HCT116 (cell line): ENCODE measurements at regions of chr9 and their contacts with region 1.

Region 1: GRCh38 chr9:113657703-113658544 is 194.4 kb downstream of the RGS3 start:
- DNase-seq: peak; percentile 75
- ATAC-seq: peak; percentile 95
- H3K4me3 ChIP-seq: no peak overlapping the region
- H3K27ac ChIP-seq: no peak overlapping the region
- H3K4me1 ChIP-seq: peaks cover 0 to 15% of the 10 kb centered on the region in 2 experiments; a peak in 1 of 4 replicates
- H3K27me3 ChIP-seq: peaks cover 14% of the 10 kb centered on the region; the same call in 1 of the 2 replicates
- CTCF ChIP-seq: peak; percentile 87 to 96 (median 95)
- POLR2A ChIP-seq: no peak
- RAD21 ChIP-seq: peak; percentile 98

Region 2: GRCh38 chr9:112921549-112921948 is 736.4 kb before region 1 on chr9:
- CTCF ChIA-PET with region 1: interaction called, 4 read pairs
- POLR2A ChIA-PET with region 1: no interaction called
- RAD21 ChIA-PET with region 1: no interaction called
- intact Hi-C with region 1: loop called (anchors 5 kb)
- DNase-seq: peak; percentile 22
- ATAC-seq: peak; percentile 85
- H3K4me3 ChIP-seq: no peak overlapping the region
- H3K27ac ChIP-seq: no peak overlapping the region
- H3K4me1 ChIP-seq: peaks cover 0 to 16% of the 10 kb centered on the region in 2 experiments; a peak in 2 of 4 replicates
- H3K27me3 ChIP-seq: no peaks in the 10 kb centered on the region
- CTCF ChIP-seq: peak; percentile 56 to 69 (median 64)
- POLR2A ChIP-seq: no peak
- RAD21 ChIP-seq: peak; percentile 68

Region 3: GRCh38 chr9:113309204-113309813 is 348.6 kb before region 1 on chr9:
- CTCF ChIA-PET with region 1: no interaction called
- POLR2A ChIA-PET with region 1: no interaction called
- RAD21 ChIA-PET with region 1: no interaction called
- intact Hi-C with region 1: loop called (anchors 10 kb)
- DNase-seq: peak; percentile 8
- ATAC-seq: peak; percentile 76
- H3K4me3 ChIP-seq: no peak overlapping the region
- H3K27ac ChIP-seq: no peak overlapping the region
- H3K4me1 ChIP-seq: no peaks in the 10 kb centered on the region
- H3K27me3 ChIP-seq: no peaks in the 10 kb centered on the region
- CTCF ChIP-seq: peak; percentile 74 to 86 (median 78)
- POLR2A ChIP-seq: no peak
- RAD21 ChIP-seq: peak; percentile 93

Region 4: GRCh38 chr9:113446323-113446740 is 211.6 kb before region 1 on chr9:
- CTCF ChIA-PET with region 1: interaction called, 159 read pairs
- POLR2A ChIA-PET with region 1: no interaction called
- RAD21 ChIA-PET with region 1: interaction called, 11 to 24 read pairs
- intact Hi-C with region 1: loop called (anchors 2 kb)
- DNase-seq: peak; percentile 31
- ATAC-seq: peak; percentile 76
- H3K4me3 ChIP-seq: no peak overlapping the region
- H3K27ac ChIP-seq: no peak overlapping the region
- H3K4me1 ChIP-seq: no peaks in the 10 kb centered on the region
- H3K27me3 ChIP-seq: no peaks in the 10 kb centered on the region
- CTCF ChIP-seq: peak; percentile 43 to 86 (median 67)
- POLR2A ChIP-seq: no peak
- RAD21 ChIP-seq: peak; percentile 90

Region 5: GRCh38 chr9:113578882-113579282 is 79.0 kb before region 1 on chr9:
- CTCF ChIA-PET with region 1: interaction called, 18 read pairs
- POLR2A ChIA-PET with region 1: no interaction called
- RAD21 ChIA-PET with region 1: interaction called in 1 of 2 experiments, 3 read pairs
- intact Hi-C with region 1: no loop called
- DNase-seq: peak; percentile 59
- ATAC-seq: peak; percentile 86
- H3K4me3 ChIP-seq: peak overlapping the region in 1 of 2 experiments; percentile 16; a peak in 2 of 4 replicates
- H3K27ac ChIP-seq: peak overlapping the region; percentile 82
- H3K4me1 ChIP-seq: peaks cover 52 to 70% of the 10 kb centered on the region in 2 experiments
- H3K27me3 ChIP-seq: no peaks in the 10 kb centered on the region
- CTCF ChIP-seq: no peak
- POLR2A ChIP-seq: no peak
- RAD21 ChIP-seq: no peak

Region 6: DNA sequence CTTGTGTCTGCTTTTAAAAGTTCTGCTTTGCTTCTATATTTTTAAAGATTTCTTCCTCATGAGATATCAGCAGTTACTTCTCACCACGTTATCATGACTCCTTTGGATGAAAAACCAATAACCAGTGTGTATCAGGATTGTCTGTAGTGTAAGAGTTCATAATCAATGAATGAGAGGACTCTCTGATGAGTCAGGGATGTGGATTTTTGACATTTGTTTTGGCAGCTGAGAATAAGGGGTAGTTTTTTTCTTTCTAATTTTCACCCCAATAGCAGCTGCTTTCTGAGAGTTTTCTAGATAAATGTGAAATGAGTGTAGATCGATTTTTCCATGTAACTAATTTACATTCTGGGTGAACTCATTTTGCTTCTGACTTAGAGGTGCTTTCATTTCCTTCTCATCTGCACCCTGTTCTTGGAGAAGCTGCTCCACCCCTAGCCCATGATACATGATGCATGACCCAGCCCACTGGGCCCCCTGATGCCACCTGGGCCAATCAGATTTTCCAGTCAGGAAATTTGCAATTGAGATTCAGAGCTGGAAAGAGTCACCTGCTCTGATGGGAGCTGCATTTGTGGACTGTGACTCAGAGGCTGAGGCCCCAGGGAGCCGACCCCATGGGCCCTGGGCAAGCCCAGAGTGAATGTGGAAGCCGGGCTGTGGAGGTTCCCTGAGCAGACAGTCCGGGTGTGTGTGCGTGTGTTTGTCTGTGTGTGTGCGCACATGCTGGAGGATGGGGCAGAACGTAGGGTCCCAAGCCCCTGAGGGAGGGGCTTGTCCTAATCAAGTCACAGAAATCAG is 35.1 kb before region 1 on chr9:
- CTCF ChIA-PET with region 1: interaction called, 11 read pairs
- POLR2A ChIA-PET with region 1: no interaction called
- RAD21 ChIA-PET with region 1: interaction called in 1 of 2 experiments, 4 read pairs
- intact Hi-C with region 1: no loop called
- DNase-seq: peak; percentile 81
- ATAC-seq: peak; percentile 86
- H3K4me3 ChIP-seq: peak overlapping the region in 1 of 2 experiments; percentile 20; a peak in 2 of 4 replicates
- H3K27ac ChIP-seq: peak overlapping the region; percentile 54
- H3K4me1 ChIP-seq: peaks cover 40 to 47% of the 10 kb centered on the region in 2 experiments
- H3K27me3 ChIP-seq: no peaks in the 10 kb centered on the region
- CTCF ChIP-seq: no peak
- POLR2A ChIP-seq: no peak
- RAD21 ChIP-seq: no peak

Region 7: DNA sequence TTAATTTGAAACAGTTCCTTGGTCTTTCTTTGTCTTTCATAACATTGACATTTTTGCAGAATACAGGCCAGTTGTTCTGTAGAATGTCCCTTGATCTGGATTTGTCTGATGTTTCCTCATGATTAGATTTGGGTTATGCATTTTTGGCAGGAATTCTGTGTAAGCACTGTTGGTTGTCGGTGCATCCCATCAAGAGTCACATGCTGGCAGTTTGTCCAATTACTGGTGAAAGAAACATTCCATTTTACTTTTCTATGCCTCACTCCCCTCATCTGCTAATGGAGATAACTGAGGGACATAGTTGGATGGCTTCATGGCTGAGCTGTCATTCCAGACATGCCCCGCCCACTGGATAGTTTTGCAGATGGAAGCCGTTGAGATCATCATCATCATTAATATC is 210.6 kb after region 1 on chr9:
- CTCF ChIA-PET with region 1: no interaction called
- POLR2A ChIA-PET with region 1: no interaction called
- RAD21 ChIA-PET with region 1: no interaction called
- intact Hi-C with region 1: no loop called
- DNase-seq: no peak
- ATAC-seq: no peak
- H3K4me3 ChIP-seq: no peak overlapping the region
- H3K27ac ChIP-seq: no peak overlapping the region
- H3K4me1 ChIP-seq: no peaks in the 10 kb centered on the region
- H3K27me3 ChIP-seq: no peaks in the 10 kb centered on the region
- CTCF ChIP-seq: no peak
- POLR2A ChIP-seq: no peak
- RAD21 ChIP-seq: no peak

Region 8: DNA sequence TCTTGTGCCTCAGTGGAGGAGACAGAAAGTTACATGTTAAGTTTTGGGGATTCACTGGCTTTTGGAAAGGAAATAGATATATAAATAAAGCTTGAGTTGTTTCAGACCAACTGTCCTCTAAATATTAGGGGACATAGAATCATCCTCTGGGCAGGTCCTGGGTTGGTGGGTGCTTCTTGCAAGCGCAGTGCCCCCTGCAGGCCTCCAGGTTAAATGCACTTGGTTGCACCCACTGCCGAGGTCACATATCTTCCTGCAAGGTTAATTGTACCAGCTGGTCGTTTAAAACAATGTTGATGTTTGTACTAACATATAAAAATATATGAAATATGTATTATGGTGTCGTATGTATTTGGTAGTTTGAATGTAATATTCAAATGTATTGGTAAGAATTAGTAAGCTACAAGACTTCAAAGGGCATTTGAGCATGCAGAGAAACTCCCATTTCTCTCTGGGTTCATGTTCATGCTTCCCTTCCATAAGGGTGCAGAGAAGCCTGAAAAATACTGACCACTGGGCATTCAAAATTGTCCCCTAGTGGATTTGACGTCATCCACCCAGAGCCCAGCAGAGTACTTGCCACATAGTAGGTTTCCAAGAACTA is 305.2 kb after region 1 on chr9:
- CTCF ChIA-PET with region 1: no interaction called
- POLR2A ChIA-PET with region 1: no interaction called
- RAD21 ChIA-PET with region 1: no interaction called
- intact Hi-C with region 1: no loop called
- DNase-seq: peak; percentile 22
- ATAC-seq: peak; percentile 78
- H3K4me3 ChIP-seq: no peak overlapping the region
- H3K27ac ChIP-seq: no peak overlapping the region
- H3K4me1 ChIP-seq: peaks cover 0 to under 1% of the 10 kb centered on the region in 2 experiments; a peak in 1 of 4 replicates
- H3K27me3 ChIP-seq: no peaks in the 10 kb centered on the region
- CTCF ChIP-seq: peak; percentile 34 to 86 (median 85); a peak in 5 of 6 replicates
- POLR2A ChIP-seq: no peak
- RAD21 ChIP-seq: peak; percentile 54